Endothelial cell of umbilical vein (primary cell): ENCODE measurements at regions of chr3 and their contacts with region 1.

Region 1: DNA sequence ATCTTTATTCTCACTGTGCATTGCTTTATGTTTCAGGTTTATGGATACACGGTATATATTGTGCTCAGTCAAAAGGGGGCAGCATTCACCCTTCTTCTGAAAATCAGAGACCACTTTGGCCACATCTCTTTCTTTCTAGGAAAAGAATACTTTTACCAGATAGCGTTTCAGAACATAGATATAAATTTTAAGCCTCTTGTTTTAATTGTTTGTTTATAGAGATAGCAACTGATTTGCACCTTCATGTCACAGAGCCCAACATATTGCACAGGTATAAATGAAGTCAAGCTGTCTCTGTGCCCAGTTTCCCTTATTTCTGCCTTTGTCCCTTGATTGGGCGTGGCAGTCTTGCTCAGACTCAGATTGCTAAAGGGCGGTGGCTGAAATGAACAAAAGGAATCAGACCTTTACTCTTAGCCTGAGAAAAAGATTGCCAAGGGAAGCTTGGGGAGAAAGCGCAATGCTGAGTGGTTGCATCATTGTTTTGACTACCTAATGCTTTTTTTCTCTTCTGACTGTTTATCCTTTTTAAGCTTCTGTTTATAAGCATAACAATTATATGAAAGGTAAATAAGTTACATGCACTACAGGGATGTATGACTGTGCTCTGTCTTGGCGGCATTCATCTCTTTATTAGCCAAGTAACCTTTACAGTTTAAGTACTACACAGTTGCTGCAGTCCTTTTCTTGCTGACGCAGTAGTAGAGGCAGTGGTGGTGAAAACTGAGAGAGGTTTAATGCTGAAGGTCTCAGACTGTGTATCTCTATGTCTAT is 70.8 kb upstream of the ZBTB20 start:
- DNase-seq: peak; percentile 75
- H3K4me3 ChIP-seq: peak overlapping the region in 1 of 3 experiments; percentile 12
- H3K27ac ChIP-seq: no peak overlapping the region
- H3K4me1 ChIP-seq: peaks cover 10% of the 10 kb centered on the region
- H3K27me3 ChIP-seq: no peaks in the 10 kb centered on the region
- CTCF ChIP-seq: peak; percentile 44 to 51
- POLR2A ChIP-seq: no peak

Region 2: DNA sequence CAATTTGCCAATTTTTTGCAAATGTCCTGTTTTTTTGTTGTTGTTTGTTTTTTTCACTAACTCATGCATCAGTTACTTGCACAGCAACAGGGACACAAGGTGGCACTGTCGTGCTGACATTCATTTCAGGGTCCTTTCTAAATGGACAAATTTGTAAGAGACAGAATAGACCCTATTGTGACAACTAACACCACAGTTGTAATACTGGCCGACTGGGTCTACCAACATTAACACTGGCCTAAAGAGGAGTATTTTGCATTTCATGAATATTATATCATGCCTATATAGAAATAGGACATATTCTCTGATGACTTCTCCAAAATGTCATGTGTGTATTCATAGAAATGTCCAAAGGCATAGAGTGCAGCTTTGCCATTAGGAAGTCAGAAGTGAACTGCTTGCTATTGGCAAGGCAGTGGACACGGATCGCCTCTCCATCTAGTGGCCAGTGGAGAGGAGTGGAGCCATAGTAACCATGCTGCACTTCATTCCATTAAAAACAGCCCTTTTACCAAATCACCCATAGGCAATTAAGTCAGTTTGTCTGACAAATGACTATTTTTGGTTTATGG is 125.6 kb before region 1 on chr3:
- CTCF ChIA-PET with region 1: no interaction called
- POLR2A ChIA-PET with region 1: no interaction called
- dilution Hi-C with region 1: no loop called
- intact Hi-C with region 1: loop called (anchors 5 kb)
- DNase-seq: peak; percentile 70
- H3K4me3 ChIP-seq: no peak overlapping the region
- H3K27ac ChIP-seq: no peak overlapping the region
- H3K4me1 ChIP-seq: no peaks in the 10 kb centered on the region
- H3K27me3 ChIP-seq: no peaks in the 10 kb centered on the region
- CTCF ChIP-seq: peak; percentile 29 to 77
- POLR2A ChIP-seq: no peak

Region 3: DNA sequence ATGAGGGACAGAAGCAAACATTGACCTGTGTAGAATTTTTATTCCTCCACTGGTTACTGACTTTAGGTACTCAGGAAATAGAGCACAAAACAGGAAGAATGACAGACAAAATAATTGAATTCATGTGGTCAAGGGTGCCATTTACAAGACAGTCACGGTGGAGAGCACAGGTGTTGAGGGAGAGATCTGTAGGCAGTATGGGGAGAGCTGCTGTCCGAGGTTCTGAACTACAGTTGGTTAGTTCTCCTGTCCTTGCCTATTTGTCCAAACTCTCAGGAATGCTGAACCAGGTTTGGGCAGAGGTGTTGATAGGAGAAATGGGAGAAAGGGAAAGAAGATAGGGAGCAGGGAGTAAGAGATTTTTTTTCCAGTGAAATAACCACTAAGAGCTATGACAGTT is 107.7 kb after region 1 on chr3:
- CTCF ChIA-PET with region 1: no interaction called
- POLR2A ChIA-PET with region 1: no interaction called
- dilution Hi-C with region 1: no loop called
- intact Hi-C with region 1: loop called (anchors 5 kb)
- DNase-seq: peak; percentile 47
- H3K4me3 ChIP-seq: no peak overlapping the region
- H3K27ac ChIP-seq: no peak overlapping the region
- H3K4me1 ChIP-seq: peaks cover 18% of the 10 kb centered on the region
- H3K27me3 ChIP-seq: no peaks in the 10 kb centered on the region
- CTCF ChIP-seq: no peak
- POLR2A ChIP-seq: no peak

Region 4: DNA sequence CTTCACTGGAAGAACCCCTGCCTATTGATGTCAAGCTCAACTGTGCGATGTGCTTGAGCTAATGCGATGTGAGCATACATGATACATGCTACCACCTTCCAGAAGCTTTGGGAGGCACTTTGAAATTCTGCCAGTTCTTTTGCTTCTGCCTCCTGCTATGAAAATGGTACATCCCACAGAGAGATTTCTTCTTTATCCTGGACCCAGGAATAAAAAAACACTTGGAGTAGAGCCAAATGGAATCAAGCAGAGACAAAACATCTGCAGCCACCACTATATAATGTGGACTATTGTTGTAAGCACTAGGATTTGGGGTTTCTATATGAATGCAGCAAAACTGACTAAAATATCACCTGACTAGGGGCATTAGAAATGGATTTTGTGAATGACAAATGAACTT is 285.5 kb after region 1 on chr3:
- CTCF ChIA-PET with region 1: no interaction called
- POLR2A ChIA-PET with region 1: no interaction called
- dilution Hi-C with region 1: no loop called
- intact Hi-C with region 1: loop called (anchors 5 kb)
- DNase-seq: no peak
- H3K4me3 ChIP-seq: no peak overlapping the region
- H3K27ac ChIP-seq: no peak overlapping the region
- H3K4me1 ChIP-seq: peaks cover 19% of the 10 kb centered on the region
- H3K27me3 ChIP-seq: peaks cover under 1 to 3% of the 10 kb centered on the region in 2 experiments
- CTCF ChIP-seq: no peak
- POLR2A ChIP-seq: no peak

Region 5: GRCh38 chr3:115658337-115659181 is 440.7 kb after region 1 on chr3:
- CTCF ChIA-PET with region 1: no interaction called
- POLR2A ChIA-PET with region 1: no interaction called
- dilution Hi-C with region 1: no loop called
- intact Hi-C with region 1: loop called (anchors 1 kb)
- DNase-seq: peak; percentile 82
- H3K4me3 ChIP-seq: peak overlapping the region; percentile 74 to 91 (median 82)
- H3K27ac ChIP-seq: peak overlapping the region; percentile 80
- H3K4me1 ChIP-seq: peaks cover 12% of the 10 kb centered on the region
- H3K27me3 ChIP-seq: peaks cover 7 to 8% of the 10 kb centered on the region in 2 experiments
- CTCF ChIP-seq: no peak
- POLR2A ChIP-seq: peak; percentile 51

Region 6: GRCh38 chr3:115814778-115815380 is 597.0 kb after region 1 on chr3:
- CTCF ChIA-PET with region 1: interaction called, 11 read pairs
- POLR2A ChIA-PET with region 1: no interaction called
- dilution Hi-C with region 1: no loop called
- intact Hi-C with region 1: loop called (anchors 1 kb)
- DNase-seq: peak; percentile 71
- H3K4me3 ChIP-seq: no peak overlapping the region
- H3K27ac ChIP-seq: no peak overlapping the region
- H3K4me1 ChIP-seq: no peaks in the 10 kb centered on the region
- H3K27me3 ChIP-seq: peaks cover 10 to 11% of the 10 kb centered on the region in 2 experiments
- CTCF ChIP-seq: peak; percentile 76 to 93
- POLR2A ChIP-seq: no peak